ENCODE measurements at regions of chr7 and their contacts with region 1.

Region 1: DNA sequence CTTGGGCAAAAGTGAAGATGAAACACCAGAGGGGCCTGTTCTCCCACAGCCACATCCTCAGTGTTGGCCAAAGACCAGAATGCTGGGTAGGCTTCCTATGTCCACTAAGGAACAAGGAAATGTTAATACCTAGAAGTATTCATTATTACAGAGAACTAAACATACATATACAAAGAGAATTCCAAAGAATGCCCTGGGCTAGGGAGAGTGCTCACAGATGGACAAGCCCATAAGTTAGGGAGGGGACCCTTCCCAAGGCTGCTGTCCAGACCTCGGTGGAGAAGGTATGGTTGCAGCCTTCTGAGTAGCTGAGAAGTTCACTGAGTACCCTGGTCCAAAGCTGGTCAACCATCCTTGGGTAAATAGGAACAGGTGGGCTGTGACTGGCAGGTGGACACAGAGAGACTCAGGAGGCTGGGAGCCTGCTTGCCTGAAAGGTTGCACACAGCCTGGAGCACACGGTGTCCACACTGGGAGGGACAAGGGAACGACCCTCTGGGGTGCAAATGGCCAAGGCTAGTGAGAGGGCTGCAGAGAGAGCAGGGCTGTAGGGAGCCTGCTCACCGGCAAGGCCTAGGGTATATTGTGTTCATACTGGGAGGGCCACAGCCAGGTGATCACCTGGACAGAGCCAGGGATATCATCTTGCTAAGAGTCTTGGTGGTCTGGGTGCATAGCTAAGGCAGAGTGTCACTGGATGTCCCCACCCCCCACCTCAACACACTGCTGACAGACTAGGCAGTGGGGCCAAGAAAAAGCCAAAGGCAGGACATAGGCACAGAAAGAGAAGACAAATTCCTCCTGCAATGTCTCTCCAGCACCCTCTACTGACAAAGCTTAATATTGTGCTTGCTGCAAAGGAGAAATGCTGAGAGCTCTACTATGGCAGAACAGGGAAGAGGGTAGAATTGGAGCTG is 40.3 kb downstream of the CPVL start:
- DNase-seq: peak; percentile 11 to 67
- ATAC-seq: peak; percentile 69 to 86 (median 79)
- H3K4me3 ChIP-seq: no peak overlapping the region
- H3K27ac ChIP-seq: no peak overlapping the region
- H3K4me1 ChIP-seq: peaks cover 0 to 24% (median 5%) of the 10 kb centered on the region in 9 donors
- H3K27me3 ChIP-seq: no peaks in the 10 kb centered on the region
- CTCF ChIP-seq: peak; percentile 72 to 91 (median 85)

Region 2: GRCh38 chr7:28921822-28922221 is 184.2 kb before region 1 on chr7:
- intact Hi-C with region 1: loop called (anchors 1 to 5 kb)
- DNase-seq: peak in 1 of 2 donors; percentile 58
- ATAC-seq: peak; percentile 85 to 95 (median 93)
- H3K4me3 ChIP-seq: peak overlapping the region in 1 of 10 donors; percentile 6
- H3K27ac ChIP-seq: no peak overlapping the region
- H3K4me1 ChIP-seq: peaks cover 0 to 27% (median 12%) of the 10 kb centered on the region in 9 donors
- H3K27me3 ChIP-seq: peaks cover 0 to 4% (median 0%) of the 10 kb centered on the region in 7 donors
- CTCF ChIP-seq: peak; percentile 81 to 90 (median 85)

Region 3: DNA sequence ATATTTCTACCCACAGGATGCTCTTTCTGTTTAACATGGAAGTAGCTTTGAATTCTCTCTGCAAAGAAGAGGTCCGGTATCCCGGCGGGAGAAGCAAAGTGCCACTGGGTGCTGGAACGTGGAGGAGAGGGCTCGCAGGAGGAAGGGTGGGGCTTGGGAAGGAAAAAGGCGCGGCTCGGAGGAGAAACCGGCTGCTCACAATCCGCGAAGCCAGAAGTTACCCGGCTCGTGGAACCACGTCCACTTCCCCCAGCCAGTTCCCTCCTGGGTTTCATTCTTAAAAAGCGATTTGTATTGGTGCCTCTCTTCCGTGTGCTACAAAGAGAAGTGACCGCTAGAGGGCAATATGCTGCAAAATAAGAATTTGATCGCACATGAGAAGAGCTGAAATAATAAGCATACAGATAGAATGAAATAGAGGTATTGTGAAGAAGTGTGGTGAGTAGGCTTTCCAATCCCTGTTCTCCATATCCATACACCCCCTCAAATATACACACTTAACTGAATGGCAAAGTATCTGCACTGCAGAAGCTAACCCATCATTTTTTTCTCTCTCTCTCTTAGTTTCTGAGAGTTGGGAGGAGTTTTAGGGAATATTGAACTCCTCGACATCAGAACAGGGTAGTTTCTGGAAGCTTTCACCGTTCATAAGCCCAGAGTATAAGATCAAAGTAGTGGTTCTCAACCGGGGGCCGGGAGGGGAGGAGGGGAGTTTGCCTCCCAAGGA is 179.0 kb before region 1 on chr7:
- intact Hi-C with region 1: loop called (anchors 1 to 5 kb)
- DNase-seq: peak; percentile 66 to 86
- ATAC-seq: peak; percentile 82 to 96 (median 94)
- H3K4me3 ChIP-seq: peak overlapping the region; percentile 24 to 65 (median 52)
- H3K27ac ChIP-seq: peak overlapping the region in 9 of 10 donors; percentile 11 to 69 (median 45)
- H3K4me1 ChIP-seq: peaks cover 0 to 24% (median 18%) of the 10 kb centered on the region in 9 donors
- H3K27me3 ChIP-seq: peaks cover 0 to 6% (median 0%) of the 10 kb centered on the region in 7 donors
- CTCF ChIP-seq: peak; percentile 73 to 91 (median 84)